Endothelial cell of umbilical vein (primary cell): ENCODE measurements at regions of chr4 and their contacts with region 1.

Region 1: DNA sequence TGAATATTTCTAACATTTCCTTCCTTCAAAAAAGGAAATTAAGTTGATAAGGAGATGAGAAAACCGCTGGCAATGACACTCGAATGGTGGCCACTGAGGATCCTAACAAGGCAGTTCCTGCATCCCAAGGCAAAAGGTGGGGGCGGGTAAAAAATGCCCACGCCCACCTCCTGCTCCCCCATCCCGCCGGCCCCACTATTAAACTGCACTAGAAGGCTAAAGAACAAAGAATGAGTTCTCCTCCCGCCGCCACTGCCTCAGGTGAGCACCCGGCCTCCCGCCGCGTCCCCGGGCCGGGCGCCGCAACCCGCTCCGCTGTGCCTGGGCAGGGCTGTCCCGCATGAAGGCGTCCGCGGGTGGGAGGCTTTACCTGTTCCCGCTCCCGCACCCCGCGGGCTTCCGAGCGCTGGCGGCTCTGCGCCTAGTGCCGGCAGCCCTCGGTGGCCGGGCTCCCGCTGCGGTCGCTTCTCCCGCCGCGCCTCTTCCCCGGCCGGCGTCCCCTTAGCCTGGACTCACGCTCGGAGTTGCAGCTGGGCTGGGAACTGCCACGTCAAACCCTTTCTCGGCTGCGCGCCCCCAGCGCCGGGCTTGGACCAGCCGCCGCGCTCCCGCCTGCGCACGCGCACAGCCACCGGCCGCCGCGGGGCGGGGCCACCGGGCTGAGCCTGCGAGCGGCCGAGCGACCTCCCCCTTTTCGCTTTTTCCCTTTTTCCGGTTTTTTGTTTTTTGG is at the start of gene SEC24D:
- DNase-seq: peak; percentile 89
- H3K4me3 ChIP-seq: peak within 1 kb of the TSS; percentile 87 to 95 (median 95)
- H3K27ac ChIP-seq: peak within 1 kb of the TSS; percentile 91
- H3K4me1 ChIP-seq: peaks cover 20% of the 10 kb centered on the region
- H3K27me3 ChIP-seq: no peaks in the 10 kb centered on the region
- CTCF ChIP-seq: no peak
- POLR2A ChIP-seq: peak; percentile 73
- total RNA-seq, gene SEC24D: 127 and 133 TPM in 2 replicates

Region 2: GRCh38 chr4:118099106-118099505 is 736.6 kb before region 1 on chr4:
- CTCF ChIA-PET with region 1: no interaction called
- POLR2A ChIA-PET with region 1: no interaction called
- dilution Hi-C with region 1: no loop called
- intact Hi-C with region 1: no loop called
- DNase-seq: no peak
- H3K4me3 ChIP-seq: no peak overlapping the region
- H3K27ac ChIP-seq: no peak overlapping the region
- H3K4me1 ChIP-seq: no peaks in the 10 kb centered on the region
- H3K27me3 ChIP-seq: no peaks in the 10 kb centered on the region
- CTCF ChIP-seq: no peak
- POLR2A ChIP-seq: no peak

Region 3: DNA sequence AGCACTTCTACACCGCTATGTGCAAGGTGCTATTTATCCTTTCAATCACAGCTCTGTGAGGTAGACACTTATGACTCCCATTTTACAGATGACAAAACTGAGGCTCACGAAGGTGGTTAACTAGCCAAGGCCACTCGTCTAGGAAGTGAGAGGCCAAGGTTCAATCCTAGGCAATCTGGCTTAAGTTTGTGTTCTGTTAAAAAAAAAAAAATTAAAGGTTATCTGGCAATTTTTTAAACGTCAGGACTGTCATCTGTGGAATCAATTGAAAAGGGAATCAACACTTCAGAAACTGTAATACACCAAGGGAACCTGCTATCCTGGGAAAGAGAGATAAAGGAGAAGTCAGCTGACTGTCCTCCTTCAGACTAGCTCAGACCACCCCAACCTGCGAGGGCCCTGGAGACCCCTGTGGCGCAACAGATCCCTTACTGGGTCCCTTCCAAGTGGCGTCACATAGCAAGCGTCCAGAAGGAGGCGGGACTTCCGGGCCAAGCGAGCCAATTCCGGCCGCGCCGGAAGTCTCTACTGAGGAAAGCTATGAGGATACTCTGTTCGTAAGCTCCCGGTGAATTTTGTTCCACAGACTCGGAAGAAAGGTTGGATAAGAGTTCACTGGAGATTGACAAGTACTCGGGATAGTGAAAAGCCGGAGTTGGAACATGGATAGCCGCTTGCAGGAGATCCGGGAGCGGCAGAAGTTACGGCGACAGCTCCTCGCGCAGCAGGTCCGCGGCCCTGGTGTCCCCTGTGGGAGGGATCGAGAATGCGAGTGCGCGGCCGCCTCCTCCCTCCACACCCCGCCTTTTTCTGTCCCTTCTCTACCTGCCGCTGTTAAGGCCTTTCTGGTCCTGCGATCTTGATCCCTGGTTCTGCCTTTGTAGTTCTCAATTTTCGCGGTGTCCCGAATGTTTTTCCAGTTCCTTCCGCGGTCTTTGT is 150.6 kb before region 1 on chr4 and contains the start of gene METTL14:
- CTCF ChIA-PET with region 1: interaction called, 3 read pairs
- POLR2A ChIA-PET with region 1: no interaction called
- dilution Hi-C with region 1: no loop called
- intact Hi-C with region 1: loop called (anchors 2 kb)
- DNase-seq: peak; percentile 94
- H3K4me3 ChIP-seq: peak within 1 kb of the TSS; percentile 74 to 95 (median 82)
- H3K27ac ChIP-seq: peak within 1 kb of the TSS; percentile 44
- H3K4me1 ChIP-seq: peaks cover 11% of the 10 kb centered on the region
- H3K27me3 ChIP-seq: no peaks in the 10 kb centered on the region
- CTCF ChIP-seq: peak in 1 of 2 donors; percentile 2
- POLR2A ChIP-seq: peak; percentile 89
- total RNA-seq, gene METTL14: 38.6 and 42.9 TPM in 2 replicates

Region 4: DNA sequence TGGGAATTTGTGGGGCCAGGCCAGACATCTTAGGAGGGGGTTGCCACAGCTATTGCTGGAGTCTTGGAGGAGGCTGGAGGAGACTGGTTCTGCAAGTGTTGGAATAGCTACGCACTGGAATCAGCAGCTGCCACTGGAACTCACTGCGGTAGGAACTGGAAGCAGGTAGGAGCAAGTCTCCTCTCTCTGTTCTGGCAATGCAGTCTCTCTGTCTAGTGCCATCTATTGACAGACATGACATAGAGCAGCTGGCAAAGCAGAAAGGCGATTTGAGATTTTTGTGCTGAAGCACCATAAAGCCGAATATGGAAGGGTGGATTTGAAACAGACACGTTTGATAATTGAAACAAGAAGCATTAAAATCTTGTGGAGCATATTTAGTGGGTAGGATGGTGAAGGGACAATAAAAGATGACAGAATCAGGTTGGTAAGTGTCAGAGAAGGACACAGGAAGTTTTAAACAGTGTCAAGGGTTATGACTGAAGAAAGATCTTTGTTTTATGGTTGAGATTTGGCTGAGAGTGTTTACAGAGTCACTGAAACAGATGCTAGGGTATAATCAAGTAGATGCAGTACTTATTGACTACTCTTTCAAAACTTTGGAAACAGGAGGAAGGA is 29.5 kb after region 1 on chr4:
- CTCF ChIA-PET with region 1: interaction called, 19 read pairs
- POLR2A ChIA-PET with region 1: no interaction called
- dilution Hi-C with region 1: no loop called
- intact Hi-C with region 1: loop called (anchors 1 kb)
- DNase-seq: peak; percentile 64
- H3K4me3 ChIP-seq: no peak overlapping the region
- H3K27ac ChIP-seq: no peak overlapping the region
- H3K4me1 ChIP-seq: peaks cover 13% of the 10 kb centered on the region
- H3K27me3 ChIP-seq: no peaks in the 10 kb centered on the region
- CTCF ChIP-seq: peak; percentile 58 to 77
- POLR2A ChIP-seq: no peak

Region 5: DNA sequence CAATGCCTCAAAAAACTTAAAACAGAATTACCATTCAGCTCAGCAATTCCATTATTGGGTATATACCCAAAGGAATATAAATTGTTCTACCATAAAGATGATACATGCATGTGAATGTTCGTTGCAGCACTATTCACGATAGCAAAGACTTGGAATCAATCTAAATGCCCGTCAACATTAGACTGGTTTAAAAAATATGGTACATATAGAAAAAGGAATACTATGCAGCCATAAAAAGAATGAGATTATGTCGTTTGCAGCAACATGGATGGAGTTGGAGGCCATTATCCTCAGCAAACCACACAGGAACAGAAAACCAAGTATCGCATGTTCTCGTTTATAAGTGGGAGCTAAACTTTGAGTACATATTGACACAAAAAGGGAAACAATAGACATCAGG is 42.1 kb after region 1 on chr4:
- CTCF ChIA-PET with region 1: no interaction called
- POLR2A ChIA-PET with region 1: no interaction called
- dilution Hi-C with region 1: no loop called
- intact Hi-C with region 1: no loop called
- DNase-seq: no peak
- H3K4me3 ChIP-seq: no peak overlapping the region
- H3K27ac ChIP-seq: no peak overlapping the region
- H3K4me1 ChIP-seq: no peaks in the 10 kb centered on the region
- H3K27me3 ChIP-seq: peaks cover 2 to 4% of the 10 kb centered on the region in 2 experiments
- CTCF ChIP-seq: no peak
- POLR2A ChIP-seq: no peak

Region 6: DNA sequence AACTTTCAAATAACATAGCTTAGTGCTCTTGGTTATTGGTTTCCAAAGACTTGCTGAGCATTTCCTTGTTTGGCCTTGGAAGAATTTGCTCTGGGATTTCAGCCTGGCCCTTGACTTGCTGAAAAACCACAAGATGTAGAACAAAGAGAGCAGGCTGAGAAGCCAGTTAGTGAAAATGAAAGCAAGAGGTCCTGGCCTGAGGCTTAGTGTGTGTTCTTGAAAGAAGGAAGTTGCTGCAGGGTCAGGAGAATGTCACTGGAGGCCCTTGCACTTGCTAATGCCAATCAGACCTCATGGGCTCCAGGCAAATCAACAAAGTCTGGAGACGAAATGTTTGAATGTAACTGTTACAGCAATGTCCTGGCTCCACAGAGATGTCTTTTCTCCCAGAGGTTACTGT is 132.3 kb after region 1 on chr4:
- CTCF ChIA-PET with region 1: interaction called, 3 read pairs
- POLR2A ChIA-PET with region 1: no interaction called
- dilution Hi-C with region 1: no loop called
- intact Hi-C with region 1: loop called (anchors 5 kb)
- DNase-seq: peak; percentile 38
- H3K4me3 ChIP-seq: no peak overlapping the region
- H3K27ac ChIP-seq: no peak overlapping the region
- H3K4me1 ChIP-seq: no peaks in the 10 kb centered on the region
- H3K27me3 ChIP-seq: no peaks in the 10 kb centered on the region
- CTCF ChIP-seq: no peak
- POLR2A ChIP-seq: no peak

Region 7: DNA sequence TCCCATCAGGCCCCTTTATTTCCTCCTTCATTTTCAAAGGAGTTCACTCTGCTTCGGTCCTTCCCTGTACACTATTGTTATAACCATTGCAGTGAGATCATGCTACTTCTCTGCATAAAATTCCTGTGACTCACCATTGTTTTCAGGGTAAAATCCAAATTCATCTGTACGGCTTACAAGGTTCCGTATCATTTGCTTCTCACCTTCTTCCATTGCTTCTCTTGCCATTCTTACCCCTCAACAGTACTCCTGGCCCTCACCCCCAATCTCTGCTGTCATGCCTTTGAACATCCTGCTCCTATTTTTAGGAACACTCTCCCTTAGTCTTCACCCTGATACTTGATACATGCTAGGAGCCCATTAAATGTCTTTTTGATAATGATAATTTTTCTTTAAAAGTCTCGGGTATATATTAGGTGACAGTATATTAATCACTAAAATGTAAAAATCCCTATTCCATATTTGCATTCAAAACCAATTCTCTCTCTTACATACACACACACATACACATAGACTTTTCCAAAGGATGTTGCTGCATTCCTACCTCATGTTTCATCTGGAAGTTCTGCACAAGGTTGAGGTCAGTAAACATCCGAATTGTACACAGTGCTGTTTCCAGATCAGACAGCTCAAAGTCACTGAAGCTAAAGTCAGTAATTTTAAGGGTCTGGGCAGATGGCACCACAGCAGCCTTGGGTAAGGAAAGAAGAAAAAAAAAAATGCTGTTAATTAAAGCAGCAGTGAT is 689.4 kb after region 1 on chr4:
- CTCF ChIA-PET with region 1: no interaction called
- POLR2A ChIA-PET with region 1: no interaction called
- dilution Hi-C with region 1: no loop called
- intact Hi-C with region 1: loop called (anchors 10 kb)
- DNase-seq: peak; percentile 90
- H3K4me3 ChIP-seq: peak overlapping the region in 1 of 3 experiments; percentile 63
- H3K27ac ChIP-seq: peak overlapping the region; percentile 99
- H3K4me1 ChIP-seq: peaks cover 47% of the 10 kb centered on the region
- H3K27me3 ChIP-seq: no peaks in the 10 kb centered on the region
- CTCF ChIP-seq: no peak
- POLR2A ChIP-seq: no peak